CD4-positive, alpha-beta memory T cell (primary cell): ENCODE measurements at regions of chr15 and their contacts with region 1.

Region 1: GRCh38 chr15:44598892-44599291 is 61.9 kb downstream of the EIF3J start:
- DNase-seq: no peak
- H3K4me3 ChIP-seq: no peak overlapping the region
- H3K4me3 Mint-ChIP-seq: no peak overlapping the region
- H3K27ac ChIP-seq: peak overlapping the region; percentile 8
- H3K27ac Mint-ChIP-seq: peak overlapping the region; percentile 2 to 93 (median 81)
- H3K4me1 ChIP-seq: peaks cover 20% of the 10 kb centered on the region
- H3K4me1 Mint-ChIP-seq: peaks cover 15 to 36% (median 20%) of the 10 kb centered on the region in 4 donors
- H3K27me3 ChIP-seq: no peaks in the 10 kb centered on the region
- H3K27me3 Mint-ChIP-seq: no peaks in the 10 kb centered on the region

Region 2: DNA sequence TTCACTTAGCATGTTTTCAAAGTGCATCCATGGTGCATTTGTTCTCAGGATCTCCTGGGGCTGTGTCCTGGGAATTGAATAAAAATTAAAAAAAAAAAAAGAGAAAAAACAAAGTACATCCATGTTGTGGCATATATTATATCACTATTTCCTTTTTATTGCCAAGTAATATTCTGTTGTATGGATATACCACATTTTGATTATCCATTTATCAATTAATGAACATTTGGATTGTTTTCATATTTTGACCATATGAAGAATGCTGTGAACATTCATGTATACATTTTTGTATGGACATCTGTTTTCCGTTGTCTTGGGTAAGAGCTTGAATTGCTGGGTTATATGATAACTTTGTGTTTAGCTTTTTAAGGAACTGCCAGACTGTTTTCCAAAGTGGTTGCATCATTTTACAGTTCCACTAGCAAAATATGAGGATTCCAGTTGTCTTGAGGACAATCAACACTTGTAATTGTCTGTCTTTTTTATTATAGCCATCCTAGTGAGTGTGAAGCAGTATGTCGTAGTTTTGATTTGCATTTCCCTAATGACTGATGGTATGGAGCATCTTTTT is 126.9 kb before region 1 on chr15:
- CTCF ChIA-PET with region 1: no interaction called
- POLR2A ChIA-PET with region 1: no interaction called
- intact Hi-C with region 1: no loop called
- DNase-seq: no peak
- H3K4me3 ChIP-seq: no peak overlapping the region
- H3K4me3 Mint-ChIP-seq: no peak overlapping the region
- H3K27ac ChIP-seq: no peak overlapping the region
- H3K27ac Mint-ChIP-seq: no peak overlapping the region
- H3K4me1 ChIP-seq: peaks cover 11% of the 10 kb centered on the region
- H3K4me1 Mint-ChIP-seq: peaks cover 14 to 25% (median 18%) of the 10 kb centered on the region in 4 donors
- H3K27me3 ChIP-seq: no peaks in the 10 kb centered on the region
- H3K27me3 Mint-ChIP-seq: no peaks in the 10 kb centered on the region

Region 3: GRCh38 chr15:44584162-44584749 is 14.6 kb before region 1 on chr15:
- CTCF ChIA-PET with region 1: interaction called, 21 read pairs
- POLR2A ChIA-PET with region 1: interaction called, 3 read pairs
- intact Hi-C with region 1: no loop called
- DNase-seq: peak; percentile 46 to 53 (median 52)
- H3K4me3 ChIP-seq: no peak overlapping the region
- H3K4me3 Mint-ChIP-seq: no peak overlapping the region
- H3K27ac ChIP-seq: no peak overlapping the region
- H3K27ac Mint-ChIP-seq: peak overlapping the region in 6 of 7 donors; percentile 12 to 86 (median 62)
- H3K4me1 ChIP-seq: peaks cover 2% of the 10 kb centered on the region
- H3K4me1 Mint-ChIP-seq: peaks cover 5 to 19% (median 12%) of the 10 kb centered on the region in 4 donors
- H3K27me3 ChIP-seq: no peaks in the 10 kb centered on the region
- H3K27me3 Mint-ChIP-seq: no peaks in the 10 kb centered on the region

Region 4: GRCh38 chr15:44719293-44719999 is 120.6 kb after region 1 on chr15:
- CTCF ChIA-PET with region 1: interaction called, 3 read pairs
- POLR2A ChIA-PET with region 1: interaction called, 15 read pairs
- intact Hi-C with region 1: no loop called
- DNase-seq: peak; percentile 71 to 79 (median 73)
- H3K4me3 ChIP-seq: no peak overlapping the region
- H3K4me3 Mint-ChIP-seq: peak overlapping the region; percentile 40 to 86 (median 72)
- H3K27ac ChIP-seq: peak overlapping the region; percentile 99
- H3K27ac Mint-ChIP-seq: peak overlapping the region; percentile 85 to 100 (median 94)
- H3K4me1 ChIP-seq: peaks cover 94% of the 10 kb centered on the region
- H3K4me1 Mint-ChIP-seq: peaks cover 69 to 94% (median 80%) of the 10 kb centered on the region in 4 donors
- H3K27me3 ChIP-seq: no peaks in the 10 kb centered on the region
- H3K27me3 Mint-ChIP-seq: no peaks in the 10 kb centered on the region